Activated CD4-positive, alpha-beta memory T cell treated with anti-CD3 and anti-CD28 coated beads for 36 hours (primary cell): ENCODE measurements at regions of chrX and their contacts with region 1.

Region 1: DNA sequence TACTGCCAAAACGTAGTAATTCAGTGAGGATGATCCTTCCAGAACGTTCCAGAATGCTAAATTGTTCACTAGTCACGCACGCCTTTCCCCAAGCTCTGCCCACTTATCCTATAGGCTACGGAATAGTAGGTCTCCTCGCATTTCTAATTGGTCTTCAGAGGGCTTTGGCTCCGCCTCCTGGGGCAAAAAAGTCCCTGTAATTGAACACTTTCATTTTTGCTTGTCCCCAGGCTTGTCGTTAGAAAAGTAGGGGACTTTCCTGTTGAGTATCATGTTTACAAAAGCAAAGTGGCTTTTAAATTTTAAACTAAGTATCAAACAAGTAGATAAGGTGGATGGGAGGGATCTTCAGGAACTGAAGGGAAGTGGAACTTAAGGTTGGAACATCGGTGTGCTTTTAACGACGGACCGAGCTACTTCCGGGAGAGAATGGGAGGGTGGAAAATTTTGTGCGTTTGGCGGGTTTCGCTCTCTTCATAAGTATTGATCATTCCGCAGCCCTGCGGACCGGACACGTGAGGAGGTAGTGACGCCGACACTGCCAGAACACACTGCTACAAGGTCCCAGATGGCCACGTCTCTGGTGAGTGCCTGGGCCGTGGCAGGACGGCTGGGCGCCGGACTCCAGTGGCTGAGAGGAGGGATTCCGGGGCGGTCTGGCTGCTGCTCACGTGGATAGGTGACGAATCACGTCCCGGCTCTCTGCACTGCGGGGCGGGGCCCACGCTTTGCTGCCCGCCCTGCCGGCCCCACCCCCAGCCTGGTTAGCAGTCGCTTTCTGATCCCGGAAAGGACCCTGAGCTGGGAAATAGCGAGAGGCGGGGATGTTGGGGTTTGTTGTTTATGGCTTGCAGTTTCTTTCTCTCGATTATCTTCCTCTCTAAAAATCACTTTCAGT is at the start of gene NXT2:
- DNase-seq: peak; percentile 90
- H3K4me3 Mint-ChIP-seq: peak within 1 kb of the TSS; percentile 90
- H3K27ac Mint-ChIP-seq: peak within 1 kb of the TSS; percentile 97
- H3K4me1 Mint-ChIP-seq: peaks cover 12% of the 10 kb centered on the region
- H3K27me3 Mint-ChIP-seq: peaks cover 6% of the 10 kb centered on the region
- total RNA-seq, gene NXT2: 12.6 to 13.9 TPM

Region 2: GRCh38 chrX:109270580-109271484 is 265.9 kb before region 1 on chrX:
- CTCF ChIA-PET with region 1: no interaction called
- POLR2A ChIA-PET with region 1: no interaction called
- intact Hi-C with region 1: loop called (anchors 5 kb)
- DNase-seq: peak; percentile 59
- H3K4me3 Mint-ChIP-seq: no peak overlapping the region
- H3K27ac Mint-ChIP-seq: no peak overlapping the region
- H3K4me1 Mint-ChIP-seq: no peaks in the 10 kb centered on the region
- H3K27me3 Mint-ChIP-seq: no peaks in the 10 kb centered on the region

Region 3: GRCh38 chrX:109684136-109684535 is 147.4 kb after region 1 on chrX:
- CTCF ChIA-PET with region 1: interaction called, 5 read pairs
- POLR2A ChIA-PET with region 1: no interaction called
- intact Hi-C with region 1: loop called (anchors 10 kb)
- DNase-seq: no peak
- H3K4me3 Mint-ChIP-seq: no peak overlapping the region
- H3K27ac Mint-ChIP-seq: no peak overlapping the region
- H3K4me1 Mint-ChIP-seq: peaks cover 18% of the 10 kb centered on the region
- H3K27me3 Mint-ChIP-seq: no peaks in the 10 kb centered on the region